OCI-LY7 (cell line): ENCODE measurements at regions of chr11 and their contacts with region 1.

Region 1: GRCh38 chr11:1572197-1573076 is at the start of gene DUSP8:
- DNase-seq: peak; percentile 58
- H3K4me3 ChIP-seq: peak within 1 kb of the TSS; percentile 64
- H3K27ac ChIP-seq: no peak within 1 kb of the TSS
- H3K4me1 ChIP-seq: peaks cover 13% of the 10 kb centered on the region
- CTCF ChIP-seq: no peak
- total RNA-seq, gene DUSP8: not detected in 2 replicates

Region 2: GRCh38 chr11:1202776-1203504 is 369.5 kb before region 1 on chr11:
- CTCF ChIA-PET with region 1: no interaction called
- POLR2A ChIA-PET with region 1: no interaction called
- intact Hi-C with region 1: loop called (anchors 10 kb)
- DNase-seq: peak; percentile 55
- H3K4me3 ChIP-seq: no peak overlapping the region
- H3K27ac ChIP-seq: no peak overlapping the region
- H3K4me1 ChIP-seq: no peaks in the 10 kb centered on the region
- CTCF ChIP-seq: peak; percentile 82

Region 3: GRCh38 chr11:1453611-1454034 is 118.8 kb before region 1 on chr11:
- CTCF ChIA-PET with region 1: no interaction called
- POLR2A ChIA-PET with region 1: no interaction called
- intact Hi-C with region 1: loop called (anchors 1 kb)
- DNase-seq: peak; percentile 74
- H3K4me3 ChIP-seq: no peak overlapping the region
- H3K27ac ChIP-seq: no peak overlapping the region
- H3K4me1 ChIP-seq: no peaks in the 10 kb centered on the region
- CTCF ChIP-seq: peak; percentile 76

Region 4: DNA sequence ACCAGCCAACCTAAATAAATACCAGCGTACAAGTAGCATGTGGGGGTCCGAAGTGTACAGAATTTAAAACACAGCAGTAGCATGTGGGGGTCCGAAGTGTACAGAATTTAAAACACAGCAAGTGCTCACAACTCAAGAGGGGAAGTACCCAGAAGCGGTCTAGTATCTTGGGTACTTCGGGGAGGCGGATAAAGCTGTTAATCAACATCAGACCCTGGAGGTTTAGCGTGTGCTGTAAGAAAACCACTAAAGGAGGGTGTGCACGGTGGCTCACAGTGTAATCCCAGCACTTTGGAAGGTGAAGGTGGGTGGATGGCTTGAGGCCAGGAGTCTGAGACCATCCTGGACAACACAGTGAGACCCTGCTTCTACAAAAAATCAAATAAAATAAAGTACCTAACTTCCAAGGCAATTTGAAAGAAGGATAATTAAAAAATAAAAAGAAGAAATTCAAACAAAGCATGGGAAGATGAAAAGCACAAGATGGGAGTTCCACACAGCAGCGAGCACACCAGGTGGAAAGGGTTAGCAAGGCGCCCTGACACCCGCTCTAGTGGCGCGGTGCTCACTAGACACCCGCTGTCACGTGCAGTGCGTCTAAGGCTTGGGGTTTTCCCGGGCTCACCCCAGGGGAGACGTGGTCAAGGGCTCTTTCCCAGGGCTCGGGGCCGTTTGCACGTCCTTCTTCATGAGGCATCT is 50.9 kb before region 1 on chr11:
- CTCF ChIA-PET with region 1: interaction called, 5 read pairs
- POLR2A ChIA-PET with region 1: interaction called, 3 read pairs
- intact Hi-C with region 1: loop called (anchors 1 kb)
- DNase-seq: peak; percentile 71
- H3K4me3 ChIP-seq: peak overlapping the region; percentile 52
- H3K27ac ChIP-seq: peak overlapping the region; percentile 88
- H3K4me1 ChIP-seq: peaks cover 53% of the 10 kb centered on the region
- CTCF ChIP-seq: 0 out of 2 replicates have a peak, but pooled peaks have one; percentile 9

Region 5: GRCh38 chr11:1546536-1547400 is 25.7 kb before region 1 on chr11:
- CTCF ChIA-PET with region 1: interaction called, 8 read pairs
- POLR2A ChIA-PET with region 1: interaction called, 9 read pairs
- intact Hi-C with region 1: loop called (anchors 1 kb)
- DNase-seq: peak; percentile 45
- H3K4me3 ChIP-seq: no peak overlapping the region
- H3K27ac ChIP-seq: no peak overlapping the region
- H3K4me1 ChIP-seq: no peaks in the 10 kb centered on the region
- CTCF ChIP-seq: peak; percentile 77